GM23248 (cell line): ENCODE measurements at regions of chr13 and their contacts with region 1.

Region 1: DNA sequence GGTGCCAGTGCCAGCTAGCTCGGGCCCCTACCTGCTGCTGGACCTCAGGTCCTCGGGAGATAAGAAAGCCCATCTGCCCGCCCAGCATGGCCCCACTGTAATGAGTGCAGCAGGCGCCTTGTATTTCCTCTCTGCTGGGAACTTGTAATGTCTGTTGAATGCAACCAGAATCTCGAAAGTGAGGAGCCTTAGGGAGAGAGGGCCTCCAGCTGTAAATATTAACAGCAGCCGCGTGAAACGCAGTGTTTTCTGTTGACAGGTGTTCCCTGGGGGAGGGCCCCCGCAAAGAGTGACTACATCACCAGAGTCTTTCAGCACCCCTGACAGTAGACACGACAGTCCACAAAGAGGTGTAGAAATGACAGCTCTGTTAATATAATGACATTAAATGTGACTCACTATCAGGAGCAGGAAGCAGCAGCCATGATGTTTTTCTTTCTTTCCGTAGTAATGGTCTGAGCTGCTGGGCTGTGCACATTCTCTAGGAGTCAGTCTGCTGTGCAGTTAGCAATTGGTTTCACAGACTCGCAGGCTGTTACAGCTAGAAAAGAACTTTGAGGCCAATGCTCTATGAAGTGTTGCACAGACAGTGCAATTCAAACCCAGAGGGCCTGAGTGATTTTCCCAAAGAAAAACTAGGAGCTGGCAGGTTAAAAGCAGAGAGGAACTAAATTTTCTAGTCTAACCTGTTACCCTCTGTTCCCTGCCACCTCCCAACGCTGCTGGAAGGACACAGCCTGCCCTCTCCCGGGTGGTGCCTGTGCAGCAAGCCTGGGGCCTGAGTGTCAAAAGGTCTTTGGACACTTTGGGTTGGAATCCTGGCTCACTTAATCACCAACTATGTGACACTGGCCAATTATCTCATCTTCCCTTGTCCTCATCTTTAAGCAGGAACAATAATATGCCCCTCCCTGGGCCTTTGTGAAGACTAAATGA is 58.6 kb upstream of the WASF3 start:
- DNase-seq: peak; percentile 61
- H3K4me3 ChIP-seq: no peak overlapping the region
- H3K27ac ChIP-seq: peak overlapping the region; percentile 68
- H3K4me1 ChIP-seq: peaks cover 57% of the 10 kb centered on the region
- H3K27me3 ChIP-seq: no peaks in the 10 kb centered on the region

Region 2: DNA sequence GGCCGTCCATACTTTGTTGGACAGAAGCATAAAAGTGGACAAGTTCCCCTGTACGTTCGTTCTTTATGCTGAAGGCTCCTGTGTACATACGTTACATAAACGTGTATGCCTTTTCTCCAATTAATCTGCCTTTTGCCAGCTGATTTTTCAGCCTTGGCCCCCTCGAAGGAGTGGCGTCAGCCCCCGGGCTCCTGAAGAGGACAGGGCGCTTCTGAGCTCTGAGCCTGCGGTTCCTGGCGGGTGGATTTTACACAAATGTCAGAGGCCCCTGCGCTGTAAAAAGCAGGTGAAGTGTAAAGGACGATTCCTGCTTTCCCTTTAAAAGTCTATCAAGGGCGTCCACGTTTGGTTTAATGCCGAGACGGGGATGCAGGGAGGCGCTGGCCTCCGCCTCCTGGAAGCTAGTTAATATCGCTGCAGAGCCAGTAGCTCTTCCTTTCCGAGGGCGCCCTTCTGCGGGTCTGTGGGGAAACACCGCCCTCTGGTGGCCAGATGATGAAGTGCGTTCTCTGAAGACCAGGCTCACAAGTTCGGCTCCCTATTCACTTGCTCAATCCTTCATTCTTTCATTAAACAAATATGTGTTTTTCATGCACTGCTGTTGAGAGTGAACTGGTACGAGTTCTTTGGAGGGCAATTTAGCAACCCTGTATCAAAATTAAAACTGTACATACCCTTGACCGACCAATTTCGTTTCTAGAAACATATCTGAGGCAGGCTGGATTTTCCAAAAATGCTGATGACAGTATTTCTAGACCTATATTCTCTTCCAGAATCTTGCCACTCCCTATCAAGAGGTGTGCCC is 199.7 kb after region 1 on chr13:
- in situ Hi-C with region 1: loop called (anchors 10 kb)
- DNase-seq: peak; percentile 92
- H3K4me3 ChIP-seq: peak overlapping the region; percentile 64
- H3K27ac ChIP-seq: no peak overlapping the region
- H3K4me1 ChIP-seq: peaks cover 5% of the 10 kb centered on the region; the same call in 1 of the 2 replicates
- H3K27me3 ChIP-seq: 0 out of 2 replicates have a peak, but pooled peaks cover 2% of the 10 kb centered on the region

Region 3: DNA sequence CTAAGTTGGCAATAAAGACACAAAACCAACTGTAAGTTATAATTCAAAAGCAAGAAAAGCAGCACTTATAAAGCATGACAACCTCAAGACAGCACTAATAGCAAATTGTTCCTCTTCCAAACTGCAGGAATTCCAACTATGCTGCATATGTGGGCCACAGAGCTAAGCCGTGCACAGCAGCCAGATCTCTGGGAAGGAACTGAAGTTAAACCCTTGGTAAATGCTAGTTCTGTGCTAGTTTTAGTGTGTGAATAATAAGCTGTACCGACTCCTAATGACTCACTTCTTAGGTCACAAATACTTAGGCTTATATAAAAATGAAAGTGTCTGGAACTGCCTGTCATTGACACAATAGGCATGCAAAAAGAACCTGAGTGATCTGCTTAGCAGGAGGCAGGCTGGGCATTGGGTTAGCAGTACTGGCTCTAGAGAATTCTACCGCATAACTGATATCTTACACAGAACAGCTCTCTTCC is 904.3 kb after region 1 on chr13:
- in situ Hi-C with region 1: no loop called
- DNase-seq: peak; percentile 79
- H3K4me3 ChIP-seq: peak overlapping the region; percentile 28; the same call in 1 of the 2 replicates
- H3K27ac ChIP-seq: peak overlapping the region; percentile 33
- H3K4me1 ChIP-seq: peaks cover 16% of the 10 kb centered on the region
- H3K27me3 ChIP-seq: peaks cover 18% of the 10 kb centered on the region